ENCODE measurements at regions of chr2 and their contacts with region 1.

Region 1: DNA sequence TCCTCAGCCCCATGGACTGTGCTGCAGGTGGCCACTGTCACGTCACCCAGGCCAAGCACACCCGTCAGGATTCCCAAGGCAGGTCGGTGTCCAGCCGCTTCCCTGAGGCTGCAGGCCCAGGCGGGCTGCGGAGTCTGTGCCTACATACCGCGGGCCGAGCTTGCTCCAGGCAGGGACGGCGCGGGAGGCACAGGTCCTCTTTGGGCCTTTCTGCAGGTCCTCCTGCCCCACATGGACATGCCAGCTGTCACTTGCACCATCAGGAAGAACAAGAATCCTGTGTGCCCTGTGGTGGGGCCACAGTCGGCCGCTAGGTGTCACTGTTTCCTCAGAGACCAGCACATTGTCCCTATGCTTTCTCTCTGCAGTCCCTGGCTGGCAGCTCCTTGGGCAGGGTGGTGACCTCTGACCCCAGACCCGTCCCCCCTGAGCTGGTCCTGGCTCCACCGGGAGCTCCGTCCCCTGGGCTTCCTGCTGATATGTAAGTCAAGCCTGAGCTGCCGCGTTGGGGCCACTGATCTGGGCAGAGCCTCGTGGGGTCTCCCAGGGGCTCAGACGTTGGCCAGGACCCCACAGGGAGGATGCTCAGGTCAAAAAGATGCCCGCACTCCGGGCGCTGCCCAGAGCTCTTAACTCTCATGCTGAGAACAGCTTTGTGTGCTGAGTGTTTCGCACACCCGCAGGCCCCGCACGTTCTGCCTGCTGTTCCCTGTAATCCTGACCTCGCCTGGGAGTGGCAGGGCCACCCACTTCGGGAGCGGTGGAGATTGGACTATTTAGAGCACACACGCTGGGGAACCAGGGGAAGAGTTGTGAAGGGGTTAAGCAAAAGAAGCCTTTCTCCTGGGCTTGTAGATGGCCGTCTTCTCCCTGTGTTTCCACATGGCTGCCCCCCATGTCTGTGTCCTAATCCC is 17.3 kb upstream of the AGXT start:
- DNase-seq: peak; percentile 71 to 89 (median 79)
- ATAC-seq: peak; percentile 79 to 93 (median 92)
- H3K4me3 ChIP-seq: no peak overlapping the region
- H3K27ac ChIP-seq: no peak overlapping the region
- H3K4me1 ChIP-seq: no peaks in the 10 kb centered on the region
- H3K27me3 ChIP-seq: no peaks in the 10 kb centered on the region
- CTCF ChIP-seq: peak; percentile 88 to 98 (median 96)
- POLR2A ChIP-seq: no peak

Region 2: GRCh38 chr2:240791821-240792628 is 59.3 kb before region 1 on chr2:
- intact Hi-C with region 1: no loop called
- DNase-seq: peak in 1 of 5 donors; percentile 10
- ATAC-seq: peak in 3 of 4 donors; percentile 25 to 45 (median 32)
- H3K4me3 ChIP-seq: no peak overlapping the region
- H3K27ac ChIP-seq: no peak overlapping the region
- H3K4me1 ChIP-seq: peaks cover 0 to 8% (median 0%) of the 10 kb centered on the region in 12 donors
- H3K27me3 ChIP-seq: peaks cover 0 to 14% (median 0%) of the 10 kb centered on the region in 9 donors
- CTCF ChIP-seq: no peak
- POLR2A ChIP-seq: no peak

Region 3: DNA sequence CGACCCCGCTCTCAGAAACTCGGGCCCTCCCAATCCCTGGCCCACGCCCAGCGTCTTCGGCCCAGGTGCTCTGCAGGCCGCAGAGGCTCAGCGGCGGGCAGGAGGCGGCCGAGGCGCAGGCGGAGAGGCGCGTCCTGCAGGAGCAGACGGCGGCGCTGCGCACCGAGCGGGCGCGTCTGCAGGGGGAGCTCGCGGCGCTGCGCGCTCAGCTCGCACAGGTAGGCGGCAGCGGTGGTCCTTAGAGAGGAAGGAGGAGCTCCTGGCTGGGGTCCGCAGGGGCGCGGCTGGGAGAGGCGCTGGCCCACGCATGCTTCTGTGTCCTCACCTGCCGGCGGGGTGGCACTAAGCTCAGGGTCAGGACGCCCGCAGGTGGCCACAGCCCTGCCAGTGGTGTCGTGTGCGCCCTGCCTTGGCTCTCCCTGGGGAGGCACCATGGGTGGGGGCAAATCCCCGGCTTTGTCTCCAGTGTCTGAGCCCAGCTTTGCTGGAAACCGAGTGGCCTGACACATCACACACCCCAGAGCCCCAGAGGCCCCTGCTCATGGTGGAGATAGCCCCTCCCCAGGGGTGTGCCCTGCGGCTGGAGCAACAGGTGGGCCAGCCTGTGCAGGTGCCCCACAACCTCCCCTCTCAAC is 132.1 kb after region 1 on chr2:
- intact Hi-C with region 1: loop called in 6 of 10 experiments (anchors 2 to 10 kb)
- DNase-seq: peak in 4 of 5 donors; percentile 22 to 54 (median 30)
- ATAC-seq: peak in 3 of 4 donors; percentile 61 to 69 (median 61)
- H3K4me3 ChIP-seq: no peak overlapping the region
- H3K27ac ChIP-seq: no peak overlapping the region
- H3K4me1 ChIP-seq: peaks cover 0 to 23% (median 14%) of the 10 kb centered on the region in 12 donors
- H3K27me3 ChIP-seq: peaks cover 0 to 14% (median 0%) of the 10 kb centered on the region in 9 donors
- CTCF ChIP-seq: peak in 11 of 12 donors; percentile 29 to 68 (median 50)
- POLR2A ChIP-seq: no peak

Region 4: GRCh38 chr2:241069821-241070281 is 218.5 kb after region 1 on chr2:
- intact Hi-C with region 1: loop called in 1 of 10 experiments (anchors 10 kb)
- DNase-seq: no peak
- ATAC-seq: no peak
- H3K4me3 ChIP-seq: no peak overlapping the region
- H3K27ac ChIP-seq: no peak overlapping the region
- H3K4me1 ChIP-seq: no peaks in the 10 kb centered on the region
- H3K27me3 ChIP-seq: no peaks in the 10 kb centered on the region
- CTCF ChIP-seq: no peak
- POLR2A ChIP-seq: no peak

Region 5: DNA sequence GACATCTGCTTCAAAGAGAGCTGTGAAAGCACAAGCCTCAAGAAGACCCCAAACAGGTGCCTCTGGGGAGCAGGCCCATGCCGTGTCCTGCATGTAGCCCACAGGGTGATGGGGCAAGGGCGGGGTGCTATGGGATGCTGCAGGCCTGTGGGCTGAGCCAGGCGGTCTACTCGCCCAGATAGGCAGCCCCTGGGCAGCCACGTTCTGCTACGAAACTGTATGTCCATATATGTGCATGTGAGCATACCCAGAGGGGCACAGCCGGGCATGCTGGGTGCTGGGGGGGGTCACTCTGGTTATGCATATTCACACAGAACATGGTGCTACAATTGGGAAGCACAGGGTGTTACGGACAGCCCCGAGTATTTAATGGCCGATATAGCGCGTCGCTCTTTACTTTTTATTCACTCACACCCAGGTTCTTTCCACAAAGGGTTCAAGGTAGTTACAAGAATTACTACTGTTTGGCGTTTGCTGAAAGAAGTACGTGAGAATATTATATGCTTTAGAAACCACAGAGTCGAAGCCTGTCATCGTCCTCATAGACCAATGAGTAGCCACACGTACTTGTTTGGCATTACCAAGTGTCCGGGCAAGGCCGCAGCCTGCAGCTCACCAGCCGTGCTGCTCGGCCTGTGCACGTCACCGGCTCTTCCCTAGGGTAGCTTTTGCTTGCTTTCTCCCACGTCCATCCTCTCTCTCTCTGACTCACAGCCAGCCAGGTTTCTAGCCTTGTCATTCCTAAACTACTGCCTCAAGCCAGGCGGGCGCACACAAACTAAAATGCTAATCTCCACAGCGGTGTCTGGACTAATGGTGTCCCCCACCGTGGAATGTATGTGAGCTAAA is 236.3 kb after region 1 on chr2:
- intact Hi-C with region 1: loop called in 1 of 10 experiments (anchors 10 kb)
- DNase-seq: no peak
- ATAC-seq: no peak
- H3K4me3 ChIP-seq: no peak overlapping the region
- H3K27ac ChIP-seq: no peak overlapping the region
- H3K4me1 ChIP-seq: no peaks in the 10 kb centered on the region
- H3K27me3 ChIP-seq: no peaks in the 10 kb centered on the region
- CTCF ChIP-seq: no peak
- POLR2A ChIP-seq: no peak

Region 6: DNA sequence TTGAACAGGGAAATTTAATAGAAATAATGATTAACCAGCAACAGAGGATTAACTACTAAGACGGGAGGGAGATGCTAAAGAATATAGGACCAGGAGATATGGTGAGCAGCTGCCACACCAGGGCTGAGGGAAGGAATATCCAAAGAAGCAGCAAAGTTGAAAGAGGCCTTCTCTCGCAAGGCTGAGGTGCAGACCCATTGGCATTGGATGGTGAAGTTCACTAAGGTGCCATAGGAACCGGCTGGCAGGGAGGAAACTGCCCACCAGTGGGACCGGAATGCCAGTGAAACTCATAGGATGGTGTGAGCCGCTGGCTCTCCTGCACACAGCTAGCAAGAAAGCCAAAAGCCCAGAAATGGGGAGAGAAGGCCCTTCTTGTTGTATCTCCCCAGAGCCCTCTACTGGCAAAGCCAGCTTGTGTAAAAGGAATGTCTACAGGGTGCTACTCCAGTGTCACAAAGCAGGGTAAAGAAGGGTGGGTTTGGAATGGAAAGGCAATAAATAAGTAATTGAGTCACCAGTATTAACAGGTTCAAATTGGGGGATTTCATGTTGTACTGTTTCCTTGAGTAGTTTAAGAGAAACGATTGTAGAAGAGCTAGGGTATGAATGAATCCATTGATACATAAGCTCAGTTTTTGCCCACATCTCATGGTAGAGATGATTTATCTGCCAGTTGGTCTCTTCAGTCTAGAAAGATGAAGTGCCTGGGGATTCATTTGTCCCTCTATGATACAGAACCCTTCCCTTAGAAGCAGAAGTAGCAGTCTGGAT is 540.7 kb after region 1 on chr2:
- intact Hi-C with region 1: loop called in 1 of 10 experiments (anchors 10 kb)
- DNase-seq: no peak
- ATAC-seq: no peak
- H3K4me3 ChIP-seq: no peak overlapping the region
- H3K27ac ChIP-seq: no peak overlapping the region
- H3K4me1 ChIP-seq: peaks cover 0 to 16% (median 0%) of the 10 kb centered on the region in 12 donors
- H3K27me3 ChIP-seq: no peaks in the 10 kb centered on the region
- CTCF ChIP-seq: peak in 8 of 12 donors; percentile 14 to 36 (median 28)
- POLR2A ChIP-seq: no peak

Region 7: GRCh38 chr2:241734467-241735208 is 883.3 kb after region 1 on chr2 and contains the start of gene D2HGDH:
- intact Hi-C with region 1: loop called in 1 of 10 experiments (anchors 5 kb)
- DNase-seq: peak; percentile 94 to 98 (median 94)
- ATAC-seq: peak; percentile 81 to 96 (median 94)
- H3K4me3 ChIP-seq: peak within 1 kb of the TSS; percentile 67 to 100 (median 94)
- H3K27ac ChIP-seq: peak within 1 kb of the TSS; percentile 70 to 96 (median 90)
- H3K4me1 ChIP-seq: peaks cover 0 to 20% (median 12%) of the 10 kb centered on the region in 12 donors
- H3K27me3 ChIP-seq: no peaks in the 10 kb centered on the region
- CTCF ChIP-seq: no peak
- POLR2A ChIP-seq: peak in 1 of 2 donors; percentile 92
- total RNA-seq, gene D2HGDH: 9.2 to 24.1 (median 20.9) TPM